Left colon (tissue), 2 donors: ENCODE measurements at regions of chr13 and their contacts with region 1.

Region 1: DNA sequence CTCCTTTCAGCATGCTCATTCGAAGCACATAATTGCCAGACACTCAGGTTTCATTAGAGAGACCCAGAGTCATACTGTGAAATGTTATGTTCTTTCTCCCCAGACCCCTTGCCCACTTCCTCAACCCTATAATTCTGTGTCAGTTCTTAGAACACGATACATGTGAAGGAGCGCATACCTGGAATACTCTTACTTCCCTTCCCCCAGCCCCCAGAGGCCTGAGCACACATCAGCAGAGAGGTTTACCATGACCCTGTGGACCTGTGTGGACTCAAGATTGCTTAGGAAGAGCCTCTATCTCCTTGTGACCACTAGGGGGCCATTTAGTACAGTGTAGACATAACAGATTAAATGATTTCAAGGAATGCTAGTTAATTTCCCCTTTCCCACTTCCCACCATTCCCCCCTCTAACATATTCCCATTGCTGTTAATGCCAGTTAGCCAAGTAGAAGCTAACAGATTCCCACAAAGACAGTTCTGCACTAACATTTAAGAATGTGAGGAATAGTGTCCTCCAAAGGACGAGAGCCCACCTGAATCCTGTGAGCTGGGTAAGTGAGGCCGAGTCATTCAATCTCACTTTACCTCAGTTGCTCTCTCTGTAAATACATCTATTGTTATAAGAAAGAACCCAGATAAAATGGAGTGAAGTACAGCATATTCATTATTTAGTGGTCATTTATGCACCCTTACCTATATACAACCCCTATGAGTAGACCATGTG is 154.2 kb upstream of the MAB21L1 start:
- DNase-seq: peak in 1 of 2 donors; percentile 4
- ATAC-seq: peak; percentile 55

Region 2: DNA sequence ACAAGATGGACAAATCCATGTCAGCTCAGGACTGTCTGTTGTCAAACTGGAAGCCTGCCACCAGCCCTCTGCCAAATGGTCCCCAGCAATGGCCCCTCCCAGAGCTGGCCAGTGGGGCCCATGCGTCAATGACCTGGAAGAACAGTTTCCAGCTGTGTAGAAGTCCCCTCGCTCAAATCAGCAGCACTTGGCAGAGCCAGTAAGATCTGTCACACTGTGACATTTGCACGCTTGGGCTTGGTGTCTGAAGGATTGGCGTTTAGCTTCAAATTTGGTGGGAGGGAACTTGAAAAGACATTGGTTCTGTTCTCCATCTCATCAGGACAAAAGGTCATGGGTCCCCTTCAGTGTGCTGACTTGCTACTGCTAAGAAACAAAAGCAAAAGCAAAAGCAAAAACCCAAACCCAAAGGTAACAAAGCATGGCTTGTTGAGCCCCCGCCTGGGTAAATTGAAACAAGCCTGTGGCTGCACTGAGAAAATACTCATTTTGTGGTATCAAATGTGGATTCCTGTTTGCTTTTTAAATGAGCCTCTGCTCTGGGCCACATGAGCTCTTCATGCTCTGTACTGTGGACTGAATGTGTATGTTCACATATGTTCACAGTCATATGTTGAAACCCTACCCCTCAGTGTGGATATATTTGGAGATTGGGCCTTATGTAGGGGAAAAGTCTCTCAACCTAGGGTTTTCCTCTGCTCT is 99.4 kb after region 1 on chr13:
- intact Hi-C with region 1: no loop called
- DNase-seq: no peak
- ATAC-seq: no peak

Region 3: DNA sequence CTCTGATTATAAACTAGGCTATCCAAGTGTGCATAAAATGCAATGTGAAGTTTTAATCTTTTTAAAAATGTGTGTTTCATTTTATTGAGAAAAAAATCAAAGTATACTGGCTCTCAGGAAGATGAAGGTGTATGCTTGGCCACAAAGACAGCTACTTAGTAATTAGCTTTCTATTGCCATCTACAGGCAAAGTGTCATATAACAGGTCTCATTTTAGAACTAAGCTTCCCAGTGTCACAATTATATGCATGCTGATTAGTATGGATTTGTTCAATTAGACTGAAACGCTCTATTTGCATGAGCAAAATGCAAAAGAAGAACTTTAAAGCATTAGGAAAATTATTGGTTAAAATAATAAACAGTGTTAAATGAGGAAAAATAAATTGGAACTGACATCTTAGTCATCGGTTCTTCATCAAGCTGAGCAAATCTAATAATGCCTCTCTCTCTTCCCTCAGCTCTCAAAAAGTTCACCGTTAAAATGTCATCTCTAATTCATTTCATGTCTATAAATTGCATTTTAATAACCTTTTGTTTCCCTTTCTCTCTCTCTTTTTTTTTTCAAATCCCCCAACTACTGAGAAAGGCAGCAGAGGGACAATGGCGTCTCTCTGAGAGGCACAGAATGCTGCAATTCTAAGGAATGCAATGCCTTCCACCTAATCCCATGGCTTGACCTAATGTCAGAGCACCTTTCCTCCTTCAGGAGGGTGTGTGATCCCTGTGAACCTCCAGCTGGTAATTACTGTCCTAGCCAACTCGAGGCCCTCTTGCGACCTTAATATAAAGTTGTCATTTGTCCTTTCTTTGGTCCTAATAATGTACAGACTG is 158.8 kb after region 1 on chr13:
- intact Hi-C with region 1: loop called in 1 of 2 experiments (anchors 10 kb)
- DNase-seq: no peak
- ATAC-seq: no peak

Region 4: GRCh38 chr13:35927567-35928021 is 296.9 kb after region 1 on chr13:
- intact Hi-C with region 1: no loop called
- DNase-seq: no peak
- ATAC-seq: no peak